SK-N-SH (cell line): ENCODE measurements at regions of chr7 and their contacts with region 1.

Region 1: DNA sequence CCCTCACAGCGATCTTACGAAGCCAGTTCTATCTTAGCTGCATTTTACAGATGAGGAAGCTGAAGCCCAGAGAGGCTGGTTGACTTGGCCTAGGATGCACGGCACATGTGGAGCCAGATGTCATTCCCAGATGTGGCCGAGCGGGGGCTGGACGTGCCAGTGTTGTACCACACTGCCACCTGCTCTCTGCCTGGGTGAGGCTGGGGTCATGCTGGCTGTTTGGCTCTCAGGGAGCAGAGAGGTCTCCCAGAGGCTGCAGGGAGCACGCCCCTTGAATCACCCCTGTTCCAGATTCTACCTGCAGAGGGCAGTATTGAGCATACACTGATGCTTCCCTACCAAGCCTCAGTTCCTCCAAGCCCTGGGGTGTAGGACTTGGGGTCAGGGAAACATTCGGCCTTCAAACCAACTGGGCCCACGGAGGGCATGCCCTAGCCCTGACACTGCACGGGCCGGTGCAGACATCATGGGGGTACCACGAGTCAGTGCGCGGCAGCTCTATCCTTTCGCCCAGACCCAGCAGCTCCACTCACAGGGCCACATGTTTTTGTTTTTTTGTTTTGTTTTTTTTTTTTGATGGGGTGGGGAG is 3.8 kb upstream of the GTF2IRD1 start:
- DNase-seq: peak; percentile 92
- H3K4me3 ChIP-seq: no peak overlapping the region
- H3K27ac ChIP-seq: no peak overlapping the region
- H3K4me1 ChIP-seq: peaks cover 0 to 8% of the 10 kb centered on the region in 2 experiments; a peak in 1 of 4 replicates
- H3K27me3 ChIP-seq: no peaks in the 10 kb centered on the region
- CTCF ChIP-seq: peak; percentile 91
- EP300 ChIP-seq: no peak
- RAD21 ChIP-seq: peak; percentile 84

Region 2: GRCh38 chr7:74242122-74242443 is 207.8 kb before region 1 on chr7:
- CTCF ChIA-PET with region 1: no interaction called
- POLR2A ChIA-PET with region 1: no interaction called
- DNase-seq: no peak
- H3K4me3 ChIP-seq: no peak overlapping the region
- H3K27ac ChIP-seq: no peak overlapping the region
- H3K4me1 ChIP-seq: no peaks in the 10 kb centered on the region
- H3K27me3 ChIP-seq: no peaks in the 10 kb centered on the region
- CTCF ChIP-seq: no peak
- EP300 ChIP-seq: no peak
- RAD21 ChIP-seq: no peak

Region 3: GRCh38 chr7:74334030-74334429 is 115.9 kb before region 1 on chr7:
- CTCF ChIA-PET with region 1: no interaction called
- POLR2A ChIA-PET with region 1: no interaction called
- DNase-seq: peak; percentile 21
- H3K4me3 ChIP-seq: no peak overlapping the region
- H3K27ac ChIP-seq: 0 out of 4 replicates have a peak overlapping the region, but pooled peaks of 1 of the 2 experiments have one; percentile 10
- H3K4me1 ChIP-seq: peaks cover 0 to 3% of the 10 kb centered on the region in 2 experiments; a peak in 1 of 4 replicates
- H3K27me3 ChIP-seq: no peaks in the 10 kb centered on the region
- CTCF ChIP-seq: no peak
- EP300 ChIP-seq: no peak
- RAD21 ChIP-seq: no peak

Region 4: DNA sequence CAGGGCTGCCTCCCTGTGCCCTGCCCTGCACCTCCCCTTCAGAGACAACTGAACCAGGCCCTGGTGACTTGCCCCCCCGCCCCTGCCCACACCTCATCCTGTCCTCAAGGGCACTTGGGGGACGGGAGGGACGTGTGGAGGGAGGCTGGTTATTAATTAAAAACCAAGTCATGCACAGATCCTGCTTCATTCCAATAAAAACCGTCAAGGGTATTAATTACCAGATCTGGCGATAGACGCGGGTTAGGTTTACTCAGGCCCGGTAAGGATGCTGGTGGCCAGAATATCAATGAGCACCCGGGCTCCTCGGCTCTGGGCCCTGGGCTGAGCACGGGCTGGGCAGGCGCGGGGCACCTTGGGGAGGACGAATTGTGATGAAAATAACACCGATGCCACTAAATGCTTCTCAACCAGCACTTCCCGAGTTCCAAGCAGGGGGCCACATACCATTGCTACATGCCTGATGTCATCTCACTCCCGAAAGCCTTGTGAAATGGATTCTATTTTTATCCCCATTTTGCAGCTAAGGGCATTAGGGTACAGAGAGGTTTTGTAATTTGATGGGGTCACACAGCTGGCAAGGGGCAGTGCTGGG is 20.7 kb before region 1 on chr7:
- CTCF ChIA-PET with region 1: interaction called, 11 read pairs
- POLR2A ChIA-PET with region 1: no interaction called
- DNase-seq: peak; percentile 36
- H3K4me3 ChIP-seq: no peak overlapping the region
- H3K27ac ChIP-seq: no peak overlapping the region
- H3K4me1 ChIP-seq: peaks cover 0 to 8% of the 10 kb centered on the region in 2 experiments; a peak in 2 of 4 replicates
- H3K27me3 ChIP-seq: no peaks in the 10 kb centered on the region
- CTCF ChIP-seq: no peak
- EP300 ChIP-seq: no peak
- RAD21 ChIP-seq: no peak

Region 5: GRCh38 chr7:74495112-74496086 is 45.5 kb after region 1 on chr7:
- CTCF ChIA-PET with region 1: interaction called, 12 read pairs
- POLR2A ChIA-PET with region 1: no interaction called
- DNase-seq: peak; percentile 23
- H3K4me3 ChIP-seq: no peak overlapping the region
- H3K27ac ChIP-seq: no peak overlapping the region
- H3K4me1 ChIP-seq: no peaks in the 10 kb centered on the region; a peak in 1 of 4 replicates
- H3K27me3 ChIP-seq: no peaks in the 10 kb centered on the region
- CTCF ChIP-seq: no peak
- EP300 ChIP-seq: no peak
- RAD21 ChIP-seq: no peak

Region 6: GRCh38 chr7:74514131-74514591 is 64.3 kb after region 1 on chr7:
- CTCF ChIA-PET with region 1: interaction called, 14 read pairs
- POLR2A ChIA-PET with region 1: no interaction called
- DNase-seq: peak; percentile 68
- H3K4me3 ChIP-seq: no peak overlapping the region
- H3K27ac ChIP-seq: peak overlapping the region in 1 of 2 experiments; percentile 65; a peak in 1 of 4 replicates
- H3K4me1 ChIP-seq: peaks cover 0 to 18% of the 10 kb centered on the region in 2 experiments; a peak in 1 of 4 replicates
- H3K27me3 ChIP-seq: no peaks in the 10 kb centered on the region
- CTCF ChIP-seq: no peak
- EP300 ChIP-seq: peak in 1 of 2 experiments; percentile 88; a peak in 2 of 4 replicates
- RAD21 ChIP-seq: no peak